Activated naive CD4-positive, alpha-beta T cell treated with anti-CD3 and anti-CD28 coated beads for 36 hours (primary cell): ENCODE measurements at regions of chr1 and their contacts with region 1.

Region 1: GRCh38 chr1:89780721-89781120 is 40.1 kb upstream of the LRRC8D start:
- DNase-seq: peak; percentile 57
- H3K4me3 Mint-ChIP-seq: peak overlapping the region; percentile 39
- H3K27ac Mint-ChIP-seq: peak overlapping the region; percentile 88
- H3K4me1 Mint-ChIP-seq: peaks cover 49% of the 10 kb centered on the region
- H3K27me3 Mint-ChIP-seq: no peaks in the 10 kb centered on the region

Region 2: GRCh38 chr1:89022167-89022959 is 758.4 kb before region 1 on chr1 and contains the start of gene GBP3:
- CTCF ChIA-PET with region 1: no interaction called
- intact Hi-C with region 1: no loop called
- DNase-seq: no peak
- H3K4me3 Mint-ChIP-seq: peak within 1 kb of the TSS; percentile 73
- H3K27ac Mint-ChIP-seq: peak within 1 kb of the TSS; percentile 72
- H3K4me1 Mint-ChIP-seq: peaks cover 51% of the 10 kb centered on the region
- H3K27me3 Mint-ChIP-seq: no peaks in the 10 kb centered on the region
- total RNA-seq, gene GBP3: 1.4 to 1.8 TPM

Region 3: DNA sequence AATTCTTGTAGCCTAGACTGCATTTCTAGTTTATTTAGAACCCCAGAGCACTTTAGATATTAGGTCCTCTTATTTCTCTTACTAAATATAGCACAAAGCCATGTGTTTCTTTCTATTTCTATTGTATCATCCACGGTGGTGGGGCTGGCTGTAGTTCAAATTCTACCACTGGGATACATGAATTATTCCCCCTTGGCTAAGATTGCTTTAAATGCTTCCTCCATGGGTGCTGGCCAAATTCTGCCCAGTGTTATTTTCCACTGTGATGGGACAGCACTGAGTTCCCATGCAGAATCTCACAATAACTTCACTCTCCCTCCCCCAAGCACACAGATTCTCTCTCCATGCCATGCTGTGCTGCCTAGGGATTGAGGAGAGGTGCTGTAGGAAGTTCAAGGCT is 458.3 kb before region 1 on chr1:
- CTCF ChIA-PET with region 1: no interaction called
- intact Hi-C with region 1: no loop called
- DNase-seq: no peak
- H3K4me3 Mint-ChIP-seq: no peak overlapping the region
- H3K27ac Mint-ChIP-seq: no peak overlapping the region
- H3K4me1 Mint-ChIP-seq: peaks cover 5% of the 10 kb centered on the region
- H3K27me3 Mint-ChIP-seq: no peaks in the 10 kb centered on the region

Region 4: DNA sequence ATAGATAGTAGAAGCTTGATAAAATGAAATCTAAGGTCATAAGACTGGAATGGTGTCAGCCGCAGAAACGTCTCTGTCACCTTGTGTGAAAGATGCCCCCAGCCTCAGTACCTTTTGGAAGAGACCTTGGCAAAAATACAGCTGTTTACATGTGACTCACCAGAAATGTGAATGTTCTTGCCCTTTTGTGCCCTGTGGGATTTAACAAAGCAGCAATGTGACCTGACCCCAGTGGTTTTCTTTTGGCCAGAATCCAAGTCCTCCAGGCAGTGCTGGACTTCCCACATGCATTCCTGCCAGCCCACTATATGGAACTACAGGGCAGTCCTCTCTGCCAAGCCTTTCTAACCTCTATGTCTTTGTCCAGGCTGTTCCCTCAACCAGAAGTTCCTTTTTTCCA is 175.0 kb before region 1 on chr1:
- CTCF ChIA-PET with region 1: no interaction called
- intact Hi-C with region 1: loop called (anchors 1 kb)
- DNase-seq: no peak
- H3K4me3 Mint-ChIP-seq: no peak overlapping the region
- H3K27ac Mint-ChIP-seq: no peak overlapping the region
- H3K4me1 Mint-ChIP-seq: peaks cover 95% of the 10 kb centered on the region
- H3K27me3 Mint-ChIP-seq: no peaks in the 10 kb centered on the region

Region 5: GRCh38 chr1:89804642-89805237 is 24.0 kb after region 1 on chr1:
- CTCF ChIA-PET with region 1: interaction called, 6 read pairs
- intact Hi-C with region 1: loop called (anchors 1 kb)
- DNase-seq: peak; percentile 96
- H3K4me3 Mint-ChIP-seq: no peak overlapping the region
- H3K27ac Mint-ChIP-seq: no peak overlapping the region
- H3K4me1 Mint-ChIP-seq: no peaks in the 10 kb centered on the region
- H3K27me3 Mint-ChIP-seq: peaks cover 2% of the 10 kb centered on the region

Region 6: GRCh38 chr1:89855413-89856123 is 74.8 kb after region 1 on chr1:
- CTCF ChIA-PET with region 1: no interaction called
- intact Hi-C with region 1: loop called (anchors 1 kb)
- DNase-seq: no peak
- H3K4me3 Mint-ChIP-seq: peak overlapping the region; percentile 44
- H3K27ac Mint-ChIP-seq: no peak overlapping the region
- H3K4me1 Mint-ChIP-seq: peaks cover 11% of the 10 kb centered on the region
- H3K27me3 Mint-ChIP-seq: no peaks in the 10 kb centered on the region

Region 7: DNA sequence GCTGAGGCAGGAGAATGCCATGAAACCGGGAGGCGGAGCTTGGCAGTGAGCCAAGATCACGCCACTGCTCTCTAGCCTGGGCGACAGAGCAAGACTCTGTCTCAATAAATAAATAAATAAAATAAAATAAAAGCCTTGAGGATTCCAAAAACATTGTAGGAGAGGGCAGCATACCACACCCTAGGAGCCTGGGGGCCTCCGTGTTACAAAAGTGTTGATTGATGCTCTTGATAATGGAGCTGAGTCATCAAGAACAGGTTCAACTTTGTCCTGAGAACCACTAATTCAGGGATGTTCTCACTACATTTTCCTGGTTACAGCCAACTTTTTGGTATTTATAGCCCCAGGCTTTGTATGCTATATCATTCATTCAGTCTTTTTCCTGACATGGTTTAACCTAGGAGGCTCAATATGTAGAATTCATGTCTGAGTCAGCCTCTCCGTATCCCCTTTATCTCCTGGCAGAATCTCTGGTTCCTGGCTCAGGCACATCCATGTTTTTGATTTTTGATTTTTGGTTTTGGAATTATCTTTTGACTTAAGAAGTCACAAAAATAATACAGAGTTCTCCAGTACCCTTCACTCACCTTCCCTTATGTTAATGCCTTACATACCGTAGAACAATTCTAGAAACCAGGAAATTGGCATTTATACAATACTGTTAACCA is 109.5 kb after region 1 on chr1:
- CTCF ChIA-PET with region 1: no interaction called
- intact Hi-C with region 1: no loop called
- DNase-seq: no peak
- H3K4me3 Mint-ChIP-seq: no peak overlapping the region
- H3K27ac Mint-ChIP-seq: peak overlapping the region; percentile 13
- H3K4me1 Mint-ChIP-seq: peaks cover 21% of the 10 kb centered on the region
- H3K27me3 Mint-ChIP-seq: no peaks in the 10 kb centered on the region

Region 8: GRCh38 chr1:89971600-89971999 is 190.9 kb after region 1 on chr1:
- CTCF ChIA-PET with region 1: interaction called, 14 read pairs
- intact Hi-C with region 1: no loop called
- DNase-seq: no peak
- H3K4me3 Mint-ChIP-seq: no peak overlapping the region
- H3K27ac Mint-ChIP-seq: no peak overlapping the region
- H3K4me1 Mint-ChIP-seq: no peaks in the 10 kb centered on the region
- H3K27me3 Mint-ChIP-seq: no peaks in the 10 kb centered on the region

Region 9: GRCh38 chr1:89994805-89995597 is 214.3 kb after region 1 on chr1 and contains the start of gene ZNF326:
- CTCF ChIA-PET with region 1: interaction called, 4 read pairs
- intact Hi-C with region 1: loop called (anchors 1 kb)
- DNase-seq: peak; percentile 94
- H3K4me3 Mint-ChIP-seq: peak within 1 kb of the TSS; percentile 96
- H3K27ac Mint-ChIP-seq: peak within 1 kb of the TSS; percentile 90
- H3K4me1 Mint-ChIP-seq: peaks cover 42% of the 10 kb centered on the region
- H3K27me3 Mint-ChIP-seq: no peaks in the 10 kb centered on the region
- total RNA-seq, gene ZNF326: 17.4 to 17.9 TPM